ENCODE measurements at regions of chr19 and their contacts with region 1.

Region 1: DNA sequence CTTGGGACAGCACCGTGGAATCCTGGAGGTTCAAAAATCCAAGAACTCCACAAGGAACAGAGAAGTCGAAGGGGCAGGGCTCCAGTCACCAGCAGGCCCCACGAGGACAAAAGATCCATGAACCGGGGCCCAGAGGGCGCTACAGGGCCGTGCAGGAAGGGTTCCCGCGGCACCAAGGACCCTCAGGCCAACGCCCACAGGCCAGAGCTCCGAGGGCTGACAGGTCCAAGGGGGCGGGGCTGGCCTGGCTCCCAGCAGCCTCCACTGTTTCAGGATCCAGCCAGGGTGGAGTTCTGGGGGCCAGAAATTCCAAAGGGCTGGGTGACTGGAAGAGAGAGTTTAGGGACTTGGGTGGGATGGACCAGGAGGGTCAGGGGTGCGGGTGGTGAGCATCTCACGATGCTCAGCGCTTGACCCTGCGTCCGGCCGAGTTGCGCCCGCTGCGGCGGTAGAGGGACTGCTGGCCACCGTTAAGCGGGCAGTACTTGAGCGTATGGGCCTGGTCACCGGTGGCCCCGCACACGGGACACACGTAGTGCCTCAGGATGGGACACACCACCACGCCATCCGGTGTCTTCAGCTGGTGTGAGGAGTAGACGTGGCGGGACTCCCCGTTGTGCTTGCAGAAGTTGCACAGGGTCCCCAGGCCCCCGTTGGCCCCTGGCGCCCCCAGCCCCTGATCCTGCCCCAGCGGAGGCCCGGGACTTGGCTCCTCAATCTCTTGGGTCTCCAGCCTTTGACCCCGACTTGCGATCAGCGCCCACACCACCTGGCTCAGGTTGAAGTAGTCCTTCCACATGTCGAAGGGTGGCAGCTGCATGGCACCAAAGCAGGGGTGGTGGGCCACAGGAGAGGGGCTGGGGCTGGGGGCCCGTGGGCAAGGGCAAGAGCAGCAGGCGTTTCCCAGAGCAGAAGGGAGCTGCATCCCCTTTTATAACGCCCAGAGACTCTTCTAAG is at the start of gene NANOS2:
- DNase-seq: no peak
- H3K4me3 ChIP-seq: no peak within 1 kb of the TSS
- H3K27ac ChIP-seq: no peak within 1 kb of the TSS
- H3K4me1 ChIP-seq: no peaks in the 10 kb centered on the region
- H3K27me3 ChIP-seq: no peaks in the 10 kb centered on the region
- CTCF ChIP-seq: no peak
- POLR2A ChIP-seq: no peak
- total RNA-seq, gene NANOS2: not detected

Region 2: DNA sequence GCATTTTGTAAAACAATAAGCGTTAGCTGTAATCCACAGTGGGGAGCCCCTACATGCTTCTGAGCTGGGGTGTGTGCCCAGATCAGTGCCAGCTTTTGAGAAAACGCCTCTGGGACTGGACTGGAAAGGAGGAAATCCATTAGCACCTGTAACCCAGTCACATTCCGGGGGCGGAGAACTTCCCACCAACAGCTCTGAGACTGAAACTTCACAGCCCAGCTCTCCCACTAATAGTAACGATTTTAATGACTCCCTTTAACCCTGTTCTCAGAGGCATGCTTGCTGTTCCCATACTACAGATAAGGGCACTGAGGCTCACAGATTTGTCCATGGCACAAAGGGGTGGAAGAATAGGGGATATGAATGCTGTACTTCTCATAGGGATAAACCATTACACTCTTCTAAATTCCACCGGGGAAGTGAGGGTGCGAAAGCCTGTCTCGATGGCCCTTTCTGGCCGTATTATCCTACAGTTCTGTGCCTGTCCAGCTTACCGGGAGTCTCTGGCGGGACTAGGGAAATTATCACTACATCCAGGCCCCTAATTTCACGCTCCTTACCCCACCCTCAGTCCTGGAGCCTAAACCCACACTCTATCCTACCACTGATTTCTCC is 184.3 kb before region 1 on chr19:
- intact Hi-C with region 1: no loop called
- DNase-seq: no peak
- H3K4me3 ChIP-seq: peak overlapping the region; percentile 63 to 83
- H3K27ac ChIP-seq: peak overlapping the region; percentile 68
- H3K4me1 ChIP-seq: peaks cover 34% of the 10 kb centered on the region
- H3K27me3 ChIP-seq: no peaks in the 10 kb centered on the region
- CTCF ChIP-seq: no peak
- POLR2A ChIP-seq: no peak

Region 3: DNA sequence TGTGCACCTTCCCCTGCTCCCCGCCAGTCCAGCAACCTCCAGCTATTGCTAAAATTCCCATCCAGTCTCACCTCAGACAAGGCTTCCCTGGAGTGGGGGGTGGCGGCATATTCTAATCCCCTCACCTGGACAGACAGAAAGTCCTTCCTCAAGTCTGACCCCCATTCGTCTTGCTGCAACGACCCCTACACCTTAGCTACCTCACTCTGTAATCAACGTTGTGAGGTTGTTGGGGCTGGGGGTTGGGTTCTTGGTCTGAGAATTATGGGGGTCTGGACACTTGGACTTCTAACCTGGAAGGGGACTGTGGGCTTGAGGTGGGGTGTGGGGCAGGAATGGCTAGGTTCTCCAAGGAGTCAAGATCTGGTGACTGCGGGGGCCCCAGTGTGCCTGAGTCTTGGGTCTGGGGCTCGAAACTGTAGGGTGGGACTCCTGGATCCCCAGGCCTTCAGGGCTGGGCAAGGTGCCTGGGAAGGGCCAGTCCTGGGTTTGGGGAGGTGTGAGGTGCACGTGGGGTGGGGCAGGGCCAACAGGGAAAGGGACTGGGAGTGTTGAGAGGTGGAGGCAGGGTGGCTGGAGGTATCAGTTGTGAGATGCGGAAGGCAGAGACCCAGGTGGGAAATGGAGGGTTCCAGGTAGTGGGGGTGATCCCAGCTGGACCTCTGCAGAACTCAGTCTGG is 48.7 kb before region 1 on chr19:
- intact Hi-C with region 1: no loop called
- DNase-seq: peak in 1 of 2 donors; percentile 78
- H3K4me3 ChIP-seq: no peak overlapping the region
- H3K27ac ChIP-seq: no peak overlapping the region
- H3K4me1 ChIP-seq: peaks cover 33% of the 10 kb centered on the region
- H3K27me3 ChIP-seq: peaks cover 10% of the 10 kb centered on the region
- CTCF ChIP-seq: no peak
- POLR2A ChIP-seq: no peak

Region 4: DNA sequence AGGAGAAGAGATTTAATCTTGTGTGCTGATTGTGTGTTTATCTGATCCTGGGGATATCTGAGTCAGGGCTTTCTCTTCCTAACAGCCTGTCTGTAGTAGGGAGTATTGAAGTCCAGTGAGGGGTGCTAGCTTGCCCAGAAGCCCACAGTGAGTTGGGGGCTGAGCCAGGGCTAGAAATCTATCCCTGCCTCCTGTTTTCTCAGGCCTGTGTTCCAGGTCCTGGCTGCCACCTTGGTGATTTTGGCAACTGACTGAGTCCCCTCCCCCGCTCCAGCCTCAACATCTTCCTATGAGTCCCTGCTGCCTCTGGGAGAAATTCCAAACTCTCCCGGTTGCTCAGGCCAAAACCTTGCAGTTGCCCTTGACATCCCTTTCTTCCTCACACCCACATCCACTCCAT is 67.2 kb after region 1 on chr19:
- intact Hi-C with region 1: no loop called
- DNase-seq: no peak
- H3K4me3 ChIP-seq: no peak overlapping the region
- H3K27ac ChIP-seq: no peak overlapping the region
- H3K4me1 ChIP-seq: no peaks in the 10 kb centered on the region
- H3K27me3 ChIP-seq: no peaks in the 10 kb centered on the region
- CTCF ChIP-seq: no peak
- POLR2A ChIP-seq: no peak

Region 5: DNA sequence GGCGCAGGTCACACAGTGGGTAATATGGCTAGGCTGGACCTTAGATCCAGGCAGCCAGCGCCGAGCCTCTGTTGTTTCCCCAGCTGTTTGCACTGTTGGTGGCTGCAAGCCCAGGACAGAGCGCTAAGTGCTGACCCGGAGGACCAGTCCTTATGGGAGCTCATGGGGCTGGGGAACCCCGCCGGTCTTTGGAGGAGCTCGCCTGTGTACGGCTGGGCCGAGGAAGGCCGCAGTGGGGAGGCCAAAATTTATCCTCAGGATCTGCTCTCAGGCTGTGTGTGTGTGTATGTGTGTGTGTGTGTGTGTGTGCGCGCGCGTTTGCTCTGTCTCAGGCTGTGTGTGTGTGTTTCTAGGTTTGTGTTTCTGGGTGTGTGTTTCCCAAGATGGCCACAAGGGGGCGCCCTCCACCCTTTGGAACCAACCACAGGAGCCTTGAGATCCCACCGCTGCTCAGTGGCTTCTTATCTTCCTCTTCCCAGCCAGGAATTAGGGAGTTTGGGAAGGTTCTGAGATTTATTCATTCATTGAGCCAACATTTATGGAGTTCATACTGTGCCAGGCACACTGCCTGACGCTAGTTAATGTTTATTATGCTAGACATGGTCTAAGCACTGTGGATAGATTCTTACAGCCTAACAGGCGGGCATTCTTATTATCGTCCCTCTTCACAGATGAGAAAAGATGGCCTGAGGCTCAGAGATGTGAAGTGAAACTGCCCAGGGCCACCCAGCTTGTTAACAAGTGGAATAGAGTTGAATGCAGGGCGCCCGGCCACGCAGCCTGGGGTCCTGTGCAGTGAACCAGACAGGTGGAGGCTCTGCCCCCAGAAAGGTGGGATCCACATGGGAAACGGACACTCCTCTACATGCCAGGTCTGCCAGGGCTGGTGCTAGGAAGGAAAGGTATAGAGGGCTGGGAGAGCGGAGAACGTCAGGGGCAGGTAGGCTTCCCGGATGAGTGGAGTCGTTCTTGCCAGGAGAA is 95.7 kb after region 1 on chr19:
- intact Hi-C with region 1: loop called (anchors 10 kb)
- DNase-seq: no peak
- H3K4me3 ChIP-seq: no peak overlapping the region
- H3K27ac ChIP-seq: no peak overlapping the region
- H3K4me1 ChIP-seq: peaks cover 6% of the 10 kb centered on the region
- H3K27me3 ChIP-seq: no peaks in the 10 kb centered on the region
- CTCF ChIP-seq: peak; percentile 56 to 74 (median 60)
- POLR2A ChIP-seq: no peak

Region 6: GRCh38 chr19:46081928-46082727 is 168.0 kb after region 1 on chr19:
- intact Hi-C with region 1: no loop called
- DNase-seq: no peak
- H3K4me3 ChIP-seq: no peak overlapping the region
- H3K27ac ChIP-seq: no peak overlapping the region
- H3K4me1 ChIP-seq: peaks cover 6% of the 10 kb centered on the region
- H3K27me3 ChIP-seq: no peaks in the 10 kb centered on the region
- CTCF ChIP-seq: peak in 2 of 3 experiments; percentile 17 to 37
- POLR2A ChIP-seq: no peak

Measured in vagina (tissue), 2 donors.